CD8-positive, alpha-beta memory T cell (primary cell): ENCODE measurements at regions of chr3 and their contacts with region 1.

Region 1: DNA sequence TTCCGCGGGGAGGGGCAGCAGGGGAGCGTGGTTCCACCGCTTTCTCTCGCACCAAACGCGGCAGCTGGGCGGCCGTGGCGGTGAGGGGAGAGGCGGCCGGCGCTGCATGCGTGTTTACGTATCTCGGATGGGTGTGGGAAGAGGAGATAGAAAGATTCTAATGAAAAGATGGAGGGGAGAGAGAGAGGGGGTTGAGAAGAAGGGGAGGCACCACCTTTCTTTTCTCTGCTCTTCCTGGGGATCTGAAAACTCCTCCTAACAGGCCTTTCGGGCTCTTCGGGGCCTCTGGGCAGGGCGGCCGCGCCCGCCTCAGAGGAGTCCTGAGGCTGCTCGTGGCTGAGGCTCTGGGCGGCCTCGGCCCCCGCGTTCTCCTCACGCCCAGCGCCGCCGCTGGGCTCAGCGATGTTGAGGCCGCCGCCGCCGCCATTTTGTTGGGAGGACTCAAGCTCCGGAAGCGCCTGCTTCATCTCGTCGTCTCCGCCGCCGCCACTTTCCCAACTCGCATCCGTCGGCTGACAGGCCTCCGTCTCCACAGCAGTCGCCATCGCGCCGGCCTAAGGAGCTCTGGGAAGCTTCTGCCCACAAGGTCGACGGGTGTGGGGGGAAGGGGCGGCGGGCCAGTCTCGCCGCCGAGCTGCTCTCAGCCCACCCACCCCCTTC is 473 bp downstream of the TASOR start:
- DNase-seq: peak; percentile 68 to 87 (median 79)
- H3K4me3 ChIP-seq: peak overlapping the region; percentile 70
- H3K4me3 Mint-ChIP-seq: peak overlapping the region; percentile 92 to 98 (median 95)
- H3K27ac ChIP-seq: peak overlapping the region; percentile 91
- H3K27ac Mint-ChIP-seq: peak overlapping the region; percentile 94 to 99 (median 96)
- H3K4me1 ChIP-seq: peaks cover 45% of the 10 kb centered on the region
- H3K4me1 Mint-ChIP-seq: peaks cover 38 to 52% (median 47%) of the 10 kb centered on the region in 3 donors
- H3K27me3 ChIP-seq: no peaks in the 10 kb centered on the region
- H3K27me3 Mint-ChIP-seq: no peaks in the 10 kb centered on the region

Region 2: DNA sequence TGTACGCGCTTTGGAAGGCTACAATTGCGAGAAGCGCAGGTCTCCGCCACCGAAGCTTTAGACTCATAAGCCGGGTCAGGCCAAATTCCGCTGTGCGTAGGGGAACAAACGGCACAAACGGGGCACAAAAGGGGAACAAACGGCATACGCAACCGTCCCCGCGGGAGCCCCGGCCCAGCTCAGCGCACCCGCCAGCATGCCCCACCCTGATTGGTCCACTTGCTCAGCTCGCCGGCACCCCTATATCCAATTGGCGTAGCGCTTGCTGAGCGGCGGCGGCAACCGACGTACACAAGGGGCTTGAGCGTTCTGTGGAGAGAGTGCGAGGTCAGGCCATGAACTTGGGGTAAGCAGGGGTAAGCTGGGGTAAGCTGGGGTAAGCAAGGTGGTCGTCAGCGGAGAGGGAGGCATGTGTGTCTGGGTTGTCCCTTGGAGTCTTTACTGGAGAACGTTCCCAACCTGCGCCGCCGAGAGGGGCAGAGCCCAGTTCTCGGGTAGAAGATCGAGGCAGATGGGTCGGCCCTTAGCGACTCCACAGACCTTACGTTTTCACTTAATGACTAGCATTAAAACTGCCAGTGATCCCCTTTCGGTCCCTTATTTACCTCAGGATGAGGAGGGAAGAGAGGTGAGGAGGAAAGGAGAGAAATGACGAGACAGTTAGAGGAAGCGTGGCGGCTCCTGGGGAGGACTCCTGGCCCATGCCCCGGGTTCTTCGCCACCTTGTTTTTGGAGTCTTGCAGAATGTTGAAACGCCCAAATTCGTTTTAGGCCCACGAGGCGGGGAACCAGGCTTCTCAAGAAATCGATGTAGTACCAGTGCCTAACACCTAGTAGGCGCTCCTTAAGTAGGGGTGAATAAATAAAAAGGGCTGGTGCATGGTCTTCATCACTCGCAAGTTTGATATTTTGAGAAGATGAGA is 125.4 kb before region 1 on chr3 and contains the start of gene CCDC66:
- CTCF ChIA-PET with region 1: no interaction called
- POLR2A ChIA-PET with region 1: interaction called, 12 read pairs
- DNase-seq: peak; percentile 90 to 96 (median 91)
- H3K4me3 ChIP-seq: peak within 1 kb of the TSS; percentile 94
- H3K4me3 Mint-ChIP-seq: peak within 1 kb of the TSS; percentile 93 to 99 (median 98)
- H3K27ac ChIP-seq: peak within 1 kb of the TSS; percentile 98
- H3K27ac Mint-ChIP-seq: peak within 1 kb of the TSS; percentile 97 to 100 (median 99)
- H3K4me1 ChIP-seq: peaks cover 26% of the 10 kb centered on the region
- H3K4me1 Mint-ChIP-seq: peaks cover 32 to 44% (median 44%) of the 10 kb centered on the region in 3 donors
- H3K27me3 ChIP-seq: no peaks in the 10 kb centered on the region
- H3K27me3 Mint-ChIP-seq: peaks cover 5 to 8% of the 10 kb centered on the region in 2 donors
- total RNA-seq, gene CCDC66: 35.7 to 38.7 TPM

Region 3: DNA sequence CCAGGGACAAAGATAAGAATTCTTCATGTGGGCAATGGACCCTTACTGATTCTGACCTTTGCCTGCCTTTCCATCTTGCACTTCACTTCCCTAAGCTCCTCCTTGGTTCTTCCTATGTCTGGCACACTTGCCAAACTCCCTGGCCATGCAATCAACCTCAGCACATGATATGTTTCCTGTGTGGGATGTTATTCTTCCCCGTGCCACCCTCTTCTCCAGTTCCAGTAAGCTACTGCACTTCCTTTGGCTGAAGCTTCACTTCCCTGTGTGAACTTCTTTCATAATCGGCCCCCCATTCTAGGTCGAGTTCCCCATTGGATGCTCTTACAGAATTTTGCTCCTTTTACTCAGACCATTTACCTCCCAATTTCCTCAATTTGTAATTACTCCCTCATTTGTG is 11.2 kb after region 1 on chr3:
- CTCF ChIA-PET with region 1: interaction called, 3 read pairs
- POLR2A ChIA-PET with region 1: interaction called, 18 read pairs
- DNase-seq: no peak
- H3K4me3 ChIP-seq: peak overlapping the region; percentile 11
- H3K4me3 Mint-ChIP-seq: peak overlapping the region; percentile 85 to 94 (median 88)
- H3K27ac ChIP-seq: no peak overlapping the region
- H3K27ac Mint-ChIP-seq: peak overlapping the region; percentile 66 to 91 (median 82)
- H3K4me1 ChIP-seq: peaks cover 37% of the 10 kb centered on the region
- H3K4me1 Mint-ChIP-seq: peaks cover 44 to 52% (median 49%) of the 10 kb centered on the region in 3 donors
- H3K27me3 ChIP-seq: no peaks in the 10 kb centered on the region
- H3K27me3 Mint-ChIP-seq: no peaks in the 10 kb centered on the region